Activated CD4-positive, alpha-beta memory T cell treated with anti-CD3 and anti-CD28 coated beads for 36 hours (primary cell): ENCODE measurements at regions of chr11 and their contacts with region 1.

Region 1: GRCh38 chr11:75814686-75815344 is at the start of gene UVRAG:
- DNase-seq: peak; percentile 98
- H3K4me3 Mint-ChIP-seq: peak within 1 kb of the TSS; percentile 88
- H3K27ac Mint-ChIP-seq: peak within 1 kb of the TSS; percentile 86
- H3K4me1 Mint-ChIP-seq: peaks cover 16% of the 10 kb centered on the region
- H3K27me3 Mint-ChIP-seq: no peaks in the 10 kb centered on the region
- total RNA-seq, gene UVRAG: 15.5 to 16.7 TPM

Region 2: DNA sequence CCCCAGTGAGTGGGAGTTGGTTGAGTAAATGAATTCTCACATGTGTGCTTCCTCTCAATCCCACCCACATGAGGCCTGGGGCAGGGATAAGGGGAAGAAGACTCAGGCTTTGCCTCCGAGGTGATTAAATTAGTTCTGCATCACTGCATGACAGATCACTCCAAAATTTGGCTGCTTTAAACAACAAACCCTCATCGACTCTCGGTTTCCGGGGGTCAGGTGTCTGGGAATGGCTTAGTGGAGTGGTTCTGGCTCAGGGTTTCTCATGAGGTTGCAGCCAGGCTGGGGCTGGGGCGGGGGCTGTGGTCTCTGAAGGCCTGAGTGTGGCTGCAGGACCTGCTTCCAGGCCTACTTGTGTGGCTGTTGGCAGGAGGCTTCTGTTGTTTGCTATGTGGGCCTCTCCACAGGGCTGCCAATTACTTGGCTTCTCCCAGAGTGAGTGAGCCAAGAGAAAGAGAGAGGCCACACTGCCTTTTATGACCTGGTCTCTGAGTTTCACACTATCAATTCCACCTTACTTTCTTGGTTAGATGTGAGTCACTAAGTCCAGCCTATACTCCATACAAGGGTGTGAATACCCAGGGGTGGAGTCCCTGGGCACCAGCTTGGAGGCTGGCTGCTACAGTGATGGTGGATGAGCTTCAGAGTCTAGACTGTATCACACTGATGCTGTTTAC is 81.2 kb before region 1 on chr11:
- CTCF ChIA-PET with region 1: no interaction called
- POLR2A ChIA-PET with region 1: no interaction called
- intact Hi-C with region 1: no loop called
- DNase-seq: peak; percentile 36
- H3K4me3 Mint-ChIP-seq: no peak overlapping the region
- H3K27ac Mint-ChIP-seq: no peak overlapping the region
- H3K4me1 Mint-ChIP-seq: peaks cover 3% of the 10 kb centered on the region
- H3K27me3 Mint-ChIP-seq: peaks cover 3% of the 10 kb centered on the region

Region 3: DNA sequence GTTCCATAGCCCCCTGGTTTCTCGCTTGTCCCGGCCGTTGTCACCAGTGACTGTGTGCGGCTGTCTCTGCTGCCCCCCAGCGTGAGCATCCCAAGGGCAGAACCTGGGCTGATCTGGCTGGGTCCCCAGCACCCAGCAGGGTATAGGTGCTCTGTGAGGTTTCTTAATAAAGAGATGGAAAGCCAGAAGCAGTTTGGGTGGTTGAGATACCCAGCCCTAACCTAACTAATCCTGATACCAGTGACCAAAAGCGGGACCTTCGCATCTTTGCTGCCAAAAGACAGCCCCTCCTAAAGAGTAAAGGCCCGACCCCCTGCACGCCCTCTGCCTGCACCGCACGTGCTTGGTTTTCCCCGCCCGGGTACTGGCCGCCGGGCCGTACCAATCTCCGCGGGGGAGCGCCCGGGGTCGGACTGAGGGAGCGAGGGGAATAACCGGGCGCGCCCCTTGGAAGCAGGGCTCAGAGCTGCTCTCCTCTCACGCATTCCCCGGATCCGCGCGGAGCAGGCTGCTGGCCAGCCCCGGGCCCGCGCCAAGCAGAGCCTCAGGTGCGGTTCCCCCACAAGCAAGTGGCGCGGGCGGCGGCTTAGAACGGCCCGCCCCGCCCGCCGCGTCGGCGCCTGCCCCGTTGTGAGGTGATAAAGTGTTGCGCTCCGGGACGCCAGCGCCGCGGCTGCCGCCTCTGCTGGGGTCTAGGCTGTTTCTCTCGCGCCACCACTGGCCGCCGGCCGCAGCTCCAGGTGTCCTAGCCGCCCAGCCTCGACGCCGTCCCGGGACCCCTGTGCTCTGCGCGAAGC is 46.5 kb before region 1 on chr11 and contains the start of gene DGAT2:
- CTCF ChIA-PET with region 1: no interaction called
- POLR2A ChIA-PET with region 1: no interaction called
- intact Hi-C with region 1: loop called (anchors 5 kb)
- DNase-seq: peak; percentile 74
- H3K4me3 Mint-ChIP-seq: peak within 1 kb of the TSS; percentile 41
- H3K27ac Mint-ChIP-seq: no peak within 1 kb of the TSS
- H3K4me1 Mint-ChIP-seq: peaks cover 24% of the 10 kb centered on the region
- H3K27me3 Mint-ChIP-seq: peaks cover 8% of the 10 kb centered on the region
- total RNA-seq, gene DGAT2: 2.5 to 3.1 TPM

Region 4: DNA sequence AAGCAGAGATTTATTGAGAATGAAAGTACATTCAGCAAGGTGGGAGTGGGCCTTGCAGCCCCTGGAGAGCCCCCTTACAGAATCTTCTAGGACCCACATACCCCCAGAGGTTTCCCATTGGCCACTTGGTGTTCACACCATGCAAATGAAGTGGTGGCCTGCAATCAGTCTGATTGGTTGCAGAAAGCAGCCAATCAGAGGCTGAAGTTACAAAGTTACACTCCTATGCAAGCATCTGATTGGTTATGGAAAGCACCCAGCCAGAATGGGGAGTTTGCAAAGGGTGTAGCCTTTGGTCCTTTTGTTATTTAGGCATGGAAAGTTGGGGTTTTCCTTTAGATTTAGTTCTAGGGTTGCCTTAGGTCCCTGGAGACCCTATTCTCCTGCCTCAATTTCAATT is 35.1 kb after region 1 on chr11:
- CTCF ChIA-PET with region 1: no interaction called
- POLR2A ChIA-PET with region 1: no interaction called
- intact Hi-C with region 1: no loop called
- DNase-seq: no peak
- H3K4me3 Mint-ChIP-seq: no peak overlapping the region
- H3K27ac Mint-ChIP-seq: no peak overlapping the region
- H3K4me1 Mint-ChIP-seq: peaks cover 13% of the 10 kb centered on the region
- H3K27me3 Mint-ChIP-seq: no peaks in the 10 kb centered on the region

Region 5: GRCh38 chr11:75867775-75868374 is 53.1 kb after region 1 on chr11:
- CTCF ChIA-PET with region 1: interaction called, 13 read pairs
- POLR2A ChIA-PET with region 1: no interaction called
- intact Hi-C with region 1: loop called (anchors 5 kb)
- DNase-seq: peak; percentile 22
- H3K4me3 Mint-ChIP-seq: no peak overlapping the region
- H3K27ac Mint-ChIP-seq: no peak overlapping the region
- H3K4me1 Mint-ChIP-seq: peaks cover 4% of the 10 kb centered on the region
- H3K27me3 Mint-ChIP-seq: no peaks in the 10 kb centered on the region

Region 6: GRCh38 chr11:76380967-76381719 is 566.3 kb after region 1 on chr11 and contains the starts of genes GVQW3 and THAP12:
- CTCF ChIA-PET with region 1: no interaction called
- POLR2A ChIA-PET with region 1: no interaction called
- intact Hi-C with region 1: loop called (anchors 1 kb)
- DNase-seq: peak; percentile 98
- H3K4me3 Mint-ChIP-seq: peak within 1 kb of the TSS; percentile 87
- H3K27ac Mint-ChIP-seq: peak within 1 kb of the TSS; percentile 89
- H3K4me1 Mint-ChIP-seq: peaks cover 57% of the 10 kb centered on the region
- H3K27me3 Mint-ChIP-seq: no peaks in the 10 kb centered on the region
- total RNA-seq, gene GVQW3: 2.3 to 3.3 TPM
- total RNA-seq, gene THAP12: 46.2 to 49.2 TPM